ENCODE measurements at regions of chr5 and their contacts with region 1.

Region 1: GRCh38 chr5:55037046-55037771 is 13.2 kb downstream of the GZMK start:
- DNase-seq: peak; percentile 85
- H3K4me3 Mint-ChIP-seq: no peak overlapping the region
- H3K27ac Mint-ChIP-seq: peak overlapping the region; percentile 98
- H3K4me1 Mint-ChIP-seq: peaks cover 53% of the 10 kb centered on the region
- H3K27me3 Mint-ChIP-seq: no peaks in the 10 kb centered on the region

Region 2: DNA sequence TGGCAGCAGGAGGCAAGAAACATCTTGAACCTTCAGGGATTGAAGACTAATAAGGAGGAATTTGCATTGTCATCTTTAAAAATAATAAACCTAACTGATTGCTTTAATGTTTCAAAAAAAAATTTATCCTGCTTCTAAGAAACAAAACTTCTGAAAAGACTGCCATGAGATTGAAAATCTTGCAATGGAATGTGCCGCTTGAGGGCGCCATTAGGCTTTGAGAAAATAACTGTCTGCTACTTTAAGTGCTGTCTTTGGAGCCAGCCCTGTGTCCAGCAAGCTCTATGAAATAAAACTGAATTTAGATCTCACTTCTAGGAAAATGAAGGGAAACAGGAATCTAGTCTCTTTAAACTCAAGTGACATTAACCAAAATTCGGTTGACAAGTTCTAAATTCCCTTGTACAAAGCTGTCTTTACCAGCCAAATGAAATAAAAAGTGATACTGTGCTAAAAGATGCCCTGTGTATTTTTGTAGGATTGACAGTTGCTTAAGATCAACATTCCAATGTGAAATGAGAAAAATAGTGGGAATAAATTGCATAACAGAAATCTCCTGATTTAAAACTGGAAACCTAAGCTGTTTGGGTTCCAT is 131.2 kb before region 1 on chr5:
- CTCF ChIA-PET with region 1: interaction called, 13 read pairs
- POLR2A ChIA-PET with region 1: interaction called, 5 read pairs
- DNase-seq: peak; percentile 80
- H3K4me3 Mint-ChIP-seq: no peak overlapping the region
- H3K27ac Mint-ChIP-seq: no peak overlapping the region
- H3K4me1 Mint-ChIP-seq: peaks cover 51% of the 10 kb centered on the region
- H3K27me3 Mint-ChIP-seq: peaks cover 46% of the 10 kb centered on the region

Region 3: DNA sequence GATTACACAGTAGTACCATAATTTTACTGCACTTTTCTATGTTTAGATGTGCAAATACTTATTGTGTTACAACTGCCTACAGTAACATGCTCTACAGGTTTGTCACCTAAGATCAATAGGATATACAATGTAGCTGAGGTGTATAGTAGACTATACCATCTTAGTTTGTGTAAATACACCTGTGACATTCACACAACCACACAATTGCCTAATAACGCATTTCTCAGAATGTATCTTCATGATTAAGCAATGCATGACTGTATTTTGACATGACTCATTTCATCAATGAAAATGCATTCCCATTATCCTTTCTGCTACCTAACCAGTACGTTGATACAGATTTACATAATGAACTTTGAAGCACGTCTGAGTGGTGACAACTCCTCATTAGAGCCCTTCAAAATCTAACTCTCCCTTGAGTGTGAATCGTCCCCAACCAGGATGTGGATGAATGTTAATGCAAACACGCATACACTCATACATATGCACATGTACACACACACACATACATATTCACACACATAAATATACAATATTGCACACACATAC is 15.2 kb after region 1 on chr5:
- CTCF ChIA-PET with region 1: interaction called, 8 read pairs
- POLR2A ChIA-PET with region 1: interaction called, 12 read pairs
- DNase-seq: no peak
- H3K4me3 Mint-ChIP-seq: no peak overlapping the region
- H3K27ac Mint-ChIP-seq: no peak overlapping the region
- H3K4me1 Mint-ChIP-seq: peaks cover 33% of the 10 kb centered on the region
- H3K27me3 Mint-ChIP-seq: no peaks in the 10 kb centered on the region

Region 4: GRCh38 chr5:55072666-55073065 is 35.5 kb after region 1 on chr5:
- CTCF ChIA-PET with region 1: interaction called, 6 read pairs
- POLR2A ChIA-PET with region 1: interaction called, 20 read pairs
- DNase-seq: no peak
- H3K4me3 Mint-ChIP-seq: peak overlapping the region; percentile 6
- H3K27ac Mint-ChIP-seq: peak overlapping the region; percentile 91
- H3K4me1 Mint-ChIP-seq: peaks cover 48% of the 10 kb centered on the region
- H3K27me3 Mint-ChIP-seq: no peaks in the 10 kb centered on the region

Region 5: GRCh38 chr5:55102348-55102747 is 65.1 kb after region 1 on chr5 and contains the start of gene GZMA:
- CTCF ChIA-PET with region 1: interaction called, 12 read pairs
- POLR2A ChIA-PET with region 1: interaction called, 50 read pairs
- DNase-seq: peak; percentile 47
- H3K4me3 Mint-ChIP-seq: peak within 1 kb of the TSS; percentile 83
- H3K27ac Mint-ChIP-seq: peak within 1 kb of the TSS; percentile 93
- H3K4me1 Mint-ChIP-seq: peaks cover 81% of the 10 kb centered on the region
- H3K27me3 Mint-ChIP-seq: peaks cover 5% of the 10 kb centered on the region
- total RNA-seq, gene GZMA: 1,058 to 1,099 TPM

Region 6: GRCh38 chr5:55146543-55147151 is 109.4 kb after region 1 on chr5:
- CTCF ChIA-PET with region 1: interaction called, 12 read pairs
- POLR2A ChIA-PET with region 1: interaction called, 6 read pairs
- DNase-seq: peak; percentile 89
- H3K4me3 Mint-ChIP-seq: no peak overlapping the region
- H3K27ac Mint-ChIP-seq: peak overlapping the region; percentile 3
- H3K4me1 Mint-ChIP-seq: peaks cover 31% of the 10 kb centered on the region
- H3K27me3 Mint-ChIP-seq: peaks cover 21% of the 10 kb centered on the region

Region 7: GRCh38 chr5:55254802-55255201 is 217.6 kb after region 1 on chr5:
- CTCF ChIA-PET with region 1: no interaction called
- POLR2A ChIA-PET with region 1: no interaction called
- DNase-seq: no peak
- H3K4me3 Mint-ChIP-seq: no peak overlapping the region
- H3K27ac Mint-ChIP-seq: no peak overlapping the region
- H3K4me1 Mint-ChIP-seq: no peaks in the 10 kb centered on the region
- H3K27me3 Mint-ChIP-seq: peaks cover 3% of the 10 kb centered on the region

Measured in activated CD4-positive, alpha-beta memory T cell treated with anti-CD3 and anti-CD28 coated beads, Interleukin-2, amount 10 ng/mL, durations not matched to agents 7 days and 5 days (primary cell).